ENCODE measurements at regions of chr12 and their contacts with region 1.

Region 1: DNA sequence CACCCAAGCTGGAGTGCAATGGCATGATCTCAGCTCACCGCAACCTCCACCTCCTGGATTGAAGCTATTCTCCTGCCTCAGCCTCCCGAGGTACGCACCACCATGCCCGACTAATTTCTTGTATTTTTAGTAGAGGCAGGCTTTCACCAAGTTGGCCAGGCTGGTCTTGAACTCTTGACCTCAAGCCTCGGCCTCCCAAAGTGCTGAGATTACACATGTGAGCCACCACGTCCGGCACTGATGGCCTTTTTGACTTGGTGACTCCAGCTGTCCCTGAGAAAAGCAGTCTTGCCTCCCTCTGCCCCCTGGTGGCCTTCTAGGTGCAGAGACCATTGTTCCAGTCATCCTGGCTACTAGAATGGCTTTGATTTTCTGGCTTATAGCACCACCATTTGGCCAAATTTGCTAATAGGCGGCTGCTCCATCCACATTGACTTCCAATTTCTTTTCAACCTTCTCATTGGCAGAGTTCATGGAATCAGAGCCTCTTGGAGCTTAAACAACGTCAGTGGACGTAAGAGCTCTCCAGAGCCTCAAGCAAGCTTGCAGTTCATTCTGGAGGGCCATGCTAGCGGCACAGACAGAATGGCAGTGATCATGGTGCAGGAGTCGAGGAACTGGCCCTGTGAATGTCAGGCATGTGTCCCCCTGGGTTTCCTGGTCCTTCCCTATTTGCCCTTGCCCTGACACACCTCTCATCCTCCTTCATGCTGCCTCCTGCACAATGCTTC is 25.4 kb upstream of the EIF4B start:
- DNase-seq: peak; percentile 85 to 92 (median 87)
- ATAC-seq: peak; percentile 98 to 99 (median 98)
- H3K4me3 ChIP-seq: no peak overlapping the region
- H3K27ac ChIP-seq: no peak overlapping the region
- H3K4me1 ChIP-seq: peaks cover 0 to 3% (median 0%) of the 10 kb centered on the region in 4 donors
- H3K27me3 ChIP-seq: no peaks in the 10 kb centered on the region
- CTCF ChIP-seq: peak; percentile 97 to 100 (median 99)
- POLR2A ChIP-seq: no peak

Region 2: DNA sequence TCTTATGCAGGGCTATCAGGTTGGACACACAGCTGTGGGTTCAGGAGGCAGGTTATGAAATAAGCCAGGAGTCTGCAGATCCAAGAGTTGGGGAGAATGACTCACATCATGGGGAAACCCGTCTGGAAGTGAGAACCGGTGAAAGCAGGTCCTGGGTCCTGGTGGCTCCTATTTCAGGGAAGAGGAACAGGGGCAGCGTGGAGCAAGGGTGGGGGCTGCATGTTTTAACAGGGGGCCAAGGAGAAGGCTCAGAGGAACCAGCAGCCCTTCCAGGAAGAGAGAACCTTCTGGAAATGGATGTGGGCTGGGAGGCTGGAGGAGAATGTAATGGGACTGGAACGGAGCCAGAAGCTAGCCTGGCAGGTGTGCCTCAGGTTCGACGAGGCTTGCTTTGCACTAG is 399.4 kb before region 1 on chr12:
- intact Hi-C with region 1: loop called in 1 of 2 experiments (anchors 10 kb)
- DNase-seq: peak in 1 of 3 donors; percentile 23
- ATAC-seq: no peak
- H3K4me3 ChIP-seq: no peak overlapping the region
- H3K27ac ChIP-seq: no peak overlapping the region
- H3K4me1 ChIP-seq: no peaks in the 10 kb centered on the region
- H3K27me3 ChIP-seq: no peaks in the 10 kb centered on the region
- CTCF ChIP-seq: no peak
- POLR2A ChIP-seq: no peak

Region 3: GRCh38 chr12:52884526-52885293 is 96.1 kb before region 1 on chr12:
- intact Hi-C with region 1: loop called (anchors 2 to 5 kb)
- DNase-seq: peak; percentile 80 to 87 (median 86)
- ATAC-seq: peak; percentile 91 to 95 (median 92)
- H3K4me3 ChIP-seq: peak overlapping the region in 1 of 3 donors; percentile 23
- H3K27ac ChIP-seq: peak overlapping the region in 1 of 3 donors; percentile 54
- H3K4me1 ChIP-seq: peaks cover 0 to 13% (median 0%) of the 10 kb centered on the region in 4 donors
- H3K27me3 ChIP-seq: no peaks in the 10 kb centered on the region
- CTCF ChIP-seq: peak; percentile 91 to 99 (median 96)
- POLR2A ChIP-seq: no peak